CD14-positive monocyte (primary cell): ENCODE measurements at regions of chr1 and their contacts with region 1.

Region 1: GRCh38 chr1:231337472-231338269 is at the start of gene EXOC8:
- DNase-seq: peak; percentile 94 to 100 (median 98)
- H3K4me3 ChIP-seq: peak within 1 kb of the TSS; percentile 88 to 92 (median 92)
- H3K4me3 Mint-ChIP-seq: peak within 1 kb of the TSS; percentile 99 to 100
- H3K27ac ChIP-seq: peak within 1 kb of the TSS; percentile 99
- H3K27ac Mint-ChIP-seq: peak within 1 kb of the TSS; percentile 98 to 99 (median 99)
- H3K4me1 ChIP-seq: peaks cover 47 to 59% of the 10 kb centered on the region in 2 donors
- H3K4me1 Mint-ChIP-seq: peaks cover 59% of the 10 kb centered on the region
- H3K27me3 ChIP-seq: no peaks in the 10 kb centered on the region
- H3K27me3 Mint-ChIP-seq: no peaks in the 10 kb centered on the region
- CTCF ChIP-seq: no peak
- polyA plus RNA-seq, gene EXOC8: 2.8 to 7.8 (median 3.1) TPM

Region 2: GRCh38 chr1:230517786-230518185 is 819.9 kb before region 1 on chr1:
- intact Hi-C with region 1: no loop called
- DNase-seq: no peak
- H3K4me3 ChIP-seq: no peak overlapping the region
- H3K4me3 Mint-ChIP-seq: no peak overlapping the region
- H3K27ac ChIP-seq: no peak overlapping the region
- H3K27ac Mint-ChIP-seq: peak overlapping the region in 1 of 7 donors; percentile 44
- H3K4me1 ChIP-seq: no peaks in the 10 kb centered on the region
- H3K4me1 Mint-ChIP-seq: no peaks in the 10 kb centered on the region
- H3K27me3 ChIP-seq: no peaks in the 10 kb centered on the region
- H3K27me3 Mint-ChIP-seq: peaks cover 4 to 18% (median 12%) of the 10 kb centered on the region in 3 donors
- CTCF ChIP-seq: no peak

Region 3: GRCh38 chr1:230642263-230642959 is 695.3 kb before region 1 on chr1 and contains the start of gene COG2:
- intact Hi-C with region 1: loop called in 1 of 2 experiments (anchors 10 kb)
- DNase-seq: peak; percentile 85 to 89 (median 87)
- H3K4me3 ChIP-seq: peak within 1 kb of the TSS; percentile 84 to 91 (median 88)
- H3K4me3 Mint-ChIP-seq: peak within 1 kb of the TSS; percentile 97 to 99
- H3K27ac ChIP-seq: peak within 1 kb of the TSS; percentile 82 to 90
- H3K27ac Mint-ChIP-seq: peak within 1 kb of the TSS; percentile 93 to 96 (median 95)
- H3K4me1 ChIP-seq: peaks cover 28 to 36% of the 10 kb centered on the region in 2 donors
- H3K4me1 Mint-ChIP-seq: peaks cover 44% of the 10 kb centered on the region
- H3K27me3 ChIP-seq: peaks cover 2 to 20% of the 10 kb centered on the region in 2 donors
- H3K27me3 Mint-ChIP-seq: peaks cover 10 to 11% (median 11%) of the 10 kb centered on the region in 3 donors
- CTCF ChIP-seq: peak; percentile 100
- polyA plus RNA-seq, gene COG2: 16.7 to 30.4 (median 24.7) TPM

Region 4: DNA sequence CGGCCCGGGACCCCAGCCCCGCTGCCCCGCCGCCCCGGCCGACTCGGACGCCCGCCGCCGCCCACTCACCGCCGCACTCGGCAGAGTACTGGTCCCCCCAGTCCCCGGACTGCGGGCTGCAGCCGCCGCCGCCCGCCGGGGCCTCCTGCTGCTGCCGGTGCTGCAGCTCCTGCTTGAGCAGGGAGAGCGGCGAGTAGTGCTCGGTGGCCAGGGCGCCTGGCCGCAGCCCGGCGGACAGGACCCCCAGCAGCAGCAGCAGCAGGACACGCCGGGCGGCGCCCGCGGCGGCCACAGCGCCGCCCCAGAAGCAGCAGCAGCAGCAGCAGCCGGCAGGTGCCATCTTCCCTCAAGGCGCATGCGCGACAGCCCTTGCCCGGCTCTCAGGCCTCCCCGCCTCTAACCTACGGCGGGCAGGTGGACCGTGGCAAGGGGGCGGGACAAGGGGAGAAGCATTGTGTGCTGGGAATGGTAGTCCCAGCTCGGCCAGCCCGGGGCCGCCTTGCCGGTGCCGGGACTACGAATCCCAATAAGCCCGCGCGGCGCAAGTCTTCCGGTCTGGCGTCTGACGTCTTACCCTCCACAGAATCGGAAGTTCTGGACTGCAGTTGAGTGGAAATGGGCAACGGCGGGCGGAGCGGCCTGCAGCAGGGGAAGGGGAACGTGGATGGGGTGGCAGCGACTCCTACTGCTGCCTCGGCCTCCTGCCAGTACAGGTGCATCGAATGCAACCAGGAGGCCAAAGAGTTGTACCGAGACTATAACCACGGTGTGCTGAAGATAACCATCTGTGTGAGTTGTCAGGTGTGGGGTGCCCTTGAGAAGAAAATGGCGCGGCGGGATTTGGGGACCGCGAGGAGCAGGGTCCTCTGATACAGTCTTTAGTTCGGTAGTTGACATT is 358.9 kb before region 1 on chr1 and contains the starts of genes ARV1 and TTC13:
- intact Hi-C with region 1: loop called in 1 of 2 experiments (anchors 5 kb)
- DNase-seq: peak; percentile 96 to 99 (median 99)
- H3K4me3 ChIP-seq: peak within 1 kb of the TSS; percentile 60 to 81 (median 66)
- H3K4me3 Mint-ChIP-seq: peak within 1 kb of the TSS; percentile 90 to 98
- H3K27ac ChIP-seq: peak within 1 kb of the TSS; percentile 41 to 80
- H3K27ac Mint-ChIP-seq: peak within 1 kb of the TSS; percentile 89 to 96 (median 95)
- H3K4me1 ChIP-seq: peaks cover 31 to 36% of the 10 kb centered on the region in 2 donors
- H3K4me1 Mint-ChIP-seq: peaks cover 22% of the 10 kb centered on the region
- H3K27me3 ChIP-seq: no peaks in the 10 kb centered on the region
- H3K27me3 Mint-ChIP-seq: peaks cover 0 to 2% (median 0%) of the 10 kb centered on the region in 3 donors
- CTCF ChIP-seq: peak; percentile 60
- polyA plus RNA-seq, gene ARV1: 7.7 to 19.2 (median 15.0) TPM
- polyA plus RNA-seq, gene TTC13: 9.2 to 24.4 (median 10.8) TPM

Region 5: GRCh38 chr1:231240883-231241735 is 96.6 kb before region 1 on chr1 and contains the start of gene GNPAT:
- intact Hi-C with region 1: loop called in 1 of 2 experiments (anchors 10 kb)
- DNase-seq: peak; percentile 78 to 82 (median 81)
- H3K4me3 ChIP-seq: peak within 1 kb of the TSS; percentile 78 to 95 (median 94)
- H3K4me3 Mint-ChIP-seq: peak within 1 kb of the TSS; percentile 92 to 97
- H3K27ac ChIP-seq: peak within 1 kb of the TSS; percentile 54 to 95
- H3K27ac Mint-ChIP-seq: peak within 1 kb of the TSS; percentile 94 to 98 (median 97)
- H3K4me1 ChIP-seq: peaks cover 30 to 34% of the 10 kb centered on the region in 2 donors
- H3K4me1 Mint-ChIP-seq: peaks cover 60% of the 10 kb centered on the region
- H3K27me3 ChIP-seq: no peaks in the 10 kb centered on the region
- H3K27me3 Mint-ChIP-seq: peaks cover 0 to 2% (median 0%) of the 10 kb centered on the region in 3 donors
- CTCF ChIP-seq: no peak
- polyA plus RNA-seq, gene GNPAT: 20.8 to 40.3 (median 34.8) TPM

Region 6: DNA sequence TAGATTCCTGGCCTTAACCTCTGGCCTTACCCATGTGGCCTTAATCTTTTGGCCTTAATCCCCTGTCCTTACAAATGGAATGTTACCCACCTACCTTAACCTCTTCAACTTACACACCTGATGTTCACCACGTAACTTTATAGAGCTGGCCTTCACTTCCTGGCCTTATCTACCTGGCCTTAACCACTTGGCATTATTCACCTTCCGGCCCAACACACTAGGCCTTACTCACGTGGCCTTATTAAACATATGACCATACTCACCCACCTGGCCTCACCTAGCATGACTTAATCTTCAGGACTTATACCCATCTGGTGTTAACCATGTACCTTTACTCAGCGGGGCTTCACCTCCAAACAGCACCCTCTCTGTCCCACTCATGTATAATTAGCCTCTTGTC is 41.7 kb before region 1 on chr1:
- intact Hi-C with region 1: no loop called
- DNase-seq: no peak
- H3K4me3 ChIP-seq: no peak overlapping the region
- H3K4me3 Mint-ChIP-seq: no peak overlapping the region
- H3K27ac ChIP-seq: no peak overlapping the region
- H3K27ac Mint-ChIP-seq: no peak overlapping the region
- H3K4me1 ChIP-seq: no peaks in the 10 kb centered on the region
- H3K4me1 Mint-ChIP-seq: no peaks in the 10 kb centered on the region
- H3K27me3 ChIP-seq: no peaks in the 10 kb centered on the region
- H3K27me3 Mint-ChIP-seq: peaks cover 0 to 2% (median 1%) of the 10 kb centered on the region in 3 donors
- CTCF ChIP-seq: no peak

Region 7: GRCh38 chr1:231421993-231422764 is 84.5 kb after region 1 on chr1 and contains the start of gene EGLN1:
- intact Hi-C with region 1: loop called in 1 of 2 experiments (anchors 5 kb)
- DNase-seq: peak; percentile 49 to 67 (median 66)
- H3K4me3 ChIP-seq: peak within 1 kb of the TSS; percentile 68 to 80 (median 71)
- H3K4me3 Mint-ChIP-seq: peak within 1 kb of the TSS; percentile 99 to 100
- H3K27ac ChIP-seq: peak within 1 kb of the TSS; percentile 14 to 67
- H3K27ac Mint-ChIP-seq: peak within 1 kb of the TSS; percentile 76 to 92 (median 88)
- H3K4me1 ChIP-seq: peaks cover 30 to 43% of the 10 kb centered on the region in 2 donors
- H3K4me1 Mint-ChIP-seq: peaks cover 45% of the 10 kb centered on the region
- H3K27me3 ChIP-seq: peaks cover 34 to 43% of the 10 kb centered on the region in 2 donors
- H3K27me3 Mint-ChIP-seq: peaks cover 30 to 34% (median 31%) of the 10 kb centered on the region in 3 donors
- CTCF ChIP-seq: peak; percentile 27
- polyA plus RNA-seq, gene EGLN1: 12.9 to 27.7 (median 23.1) TPM

Region 8: GRCh38 chr1:231528172-231529029 is 190.7 kb after region 1 on chr1 and contains the start of gene TSNAX:
- intact Hi-C with region 1: loop called in 1 of 2 experiments (anchors 5 kb)
- DNase-seq: peak; percentile 89 to 94 (median 91)
- H3K4me3 ChIP-seq: peak within 1 kb of the TSS; percentile 54 to 84 (median 80)
- H3K4me3 Mint-ChIP-seq: peak within 1 kb of the TSS; percentile 92 to 96
- H3K27ac ChIP-seq: peak within 1 kb of the TSS; percentile 87 to 95
- H3K27ac Mint-ChIP-seq: peak within 1 kb of the TSS; percentile 99 to 100 (median 100)
- H3K4me1 ChIP-seq: peaks cover 58 to 67% of the 10 kb centered on the region in 2 donors
- H3K4me1 Mint-ChIP-seq: peaks cover 60% of the 10 kb centered on the region
- H3K27me3 ChIP-seq: no peaks in the 10 kb centered on the region
- H3K27me3 Mint-ChIP-seq: peaks cover 0 to 2% (median 1%) of the 10 kb centered on the region in 3 donors
- CTCF ChIP-seq: no peak
- polyA plus RNA-seq, gene TSNAX: 15.6 to 86.9 (median 82.0) TPM